SK-N-SH (cell line): ENCODE measurements at regions of chrX and their contacts with region 1.

Region 1: DNA sequence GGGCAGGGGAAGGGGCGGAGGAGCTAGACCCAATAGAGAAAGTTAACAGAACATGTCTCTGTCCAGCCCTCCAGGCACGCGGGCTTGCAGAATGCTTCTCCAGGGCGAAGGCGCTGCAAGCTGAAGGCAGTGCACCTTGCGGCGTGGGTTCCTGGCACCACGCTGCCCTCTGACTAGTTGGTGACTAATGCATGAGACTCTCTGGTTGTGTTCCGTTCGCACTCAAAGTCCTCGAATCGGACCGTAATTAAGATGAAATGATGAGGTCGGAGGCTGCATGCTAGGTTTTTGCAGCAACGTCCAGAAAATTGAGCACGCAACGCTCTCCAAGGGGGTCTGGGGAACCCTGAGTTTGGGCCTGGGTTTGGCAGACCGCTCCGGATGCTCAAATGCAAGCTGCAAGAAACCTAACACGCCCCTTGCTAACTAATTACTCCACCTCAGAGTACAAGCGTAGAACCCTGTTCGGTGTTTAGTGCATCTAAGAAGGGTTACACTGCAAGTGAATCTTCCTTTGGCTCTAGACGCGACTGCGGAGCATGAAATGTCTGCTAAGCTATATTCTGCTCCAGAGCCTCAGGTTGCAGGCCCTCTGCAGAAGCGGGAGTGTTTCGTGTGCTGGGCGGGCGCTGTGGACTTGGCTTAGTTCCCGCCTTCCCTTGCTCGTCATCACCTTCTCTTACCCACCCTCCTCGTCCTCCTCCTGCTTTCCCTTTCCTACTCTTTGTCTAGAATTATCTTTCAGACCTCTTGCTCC is 57.1 kb upstream of the NKAP start:
- DNase-seq: no peak
- H3K4me3 ChIP-seq: no peak overlapping the region
- H3K27ac ChIP-seq: no peak overlapping the region
- H3K4me1 ChIP-seq: no peaks in the 10 kb centered on the region
- H3K27me3 ChIP-seq: peaks cover 64% of the 10 kb centered on the region
- CTCF ChIP-seq: no peak
- EP300 ChIP-seq: no peak
- RAD21 ChIP-seq: no peak

Region 2: DNA sequence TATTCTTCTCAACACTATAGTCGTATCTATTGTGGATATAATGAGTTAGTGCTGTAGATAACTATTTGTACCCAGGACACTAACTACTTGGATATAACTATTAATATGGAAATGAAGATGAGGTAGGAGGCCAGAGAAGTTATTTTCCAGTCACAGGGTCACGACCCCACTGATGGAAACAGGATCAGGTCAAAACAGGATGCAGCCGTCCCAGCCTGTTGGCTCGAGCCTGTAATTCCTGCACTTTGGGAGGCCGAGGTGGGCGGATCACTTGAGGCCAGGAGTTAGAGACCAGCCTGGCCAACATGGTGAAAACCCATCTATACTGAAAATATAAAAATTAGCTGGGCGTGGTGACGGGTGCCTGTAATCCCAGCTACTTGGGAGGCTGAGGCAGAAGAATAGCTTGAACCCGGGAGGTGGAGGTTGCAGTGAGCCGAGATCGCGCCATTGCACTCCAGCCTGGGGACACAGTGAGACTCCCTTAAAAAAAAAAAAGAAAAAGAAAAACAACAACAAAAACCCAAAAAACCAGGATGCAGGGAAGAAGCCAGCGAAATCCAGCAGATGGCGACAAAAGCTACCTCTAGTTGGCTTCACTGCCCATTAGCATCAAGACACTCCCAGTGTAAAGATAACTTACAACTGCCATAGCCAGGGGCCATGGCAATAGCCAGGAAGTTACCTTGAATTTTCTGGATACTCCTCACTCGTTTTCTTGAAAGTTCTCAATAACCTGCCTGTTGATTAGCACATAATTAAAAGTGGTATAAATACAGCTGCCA is 19.2 kb before region 1 on chrX:
- CTCF ChIA-PET with region 1: interaction called, 25 read pairs
- POLR2A ChIA-PET with region 1: no interaction called
- DNase-seq: peak; percentile 61
- H3K4me3 ChIP-seq: no peak overlapping the region; a peak in 1 of 4 replicates
- H3K27ac ChIP-seq: no peak overlapping the region
- H3K4me1 ChIP-seq: no peaks in the 10 kb centered on the region
- H3K27me3 ChIP-seq: peaks cover 7% of the 10 kb centered on the region; the same call in 1 of the 2 replicates
- CTCF ChIP-seq: peak; percentile 74
- EP300 ChIP-seq: no peak
- RAD21 ChIP-seq: peak; percentile 62